K562 (cell line): ENCODE measurements at regions of chr7 and their contacts with region 1.

Region 1: GRCh38 chr7:149310113-149310836 is 48.3 kb downstream of the ZNF783 start:
- DNase-seq: peak; percentile 71 to 75 (median 73)
- ATAC-seq: peak; percentile 92
- H3K4me3 ChIP-seq: no peak overlapping the region
- H3K27ac ChIP-seq: no peak overlapping the region
- H3K4me1 ChIP-seq: peaks cover 0 to 3% of the 10 kb centered on the region in 2 experiments; a peak in 1 of 5 replicates
- H3K27me3 ChIP-seq: peaks cover 0 to 7% of the 10 kb centered on the region in 2 experiments; a peak in 1 of 5 replicates
- CTCF ChIP-seq: peak; percentile 84 to 94 (median 88); a peak in 5 of 6 replicates
- EP300 ChIP-seq: peak; percentile 12; the same call in 1 of the 2 replicates
- POLR2A ChIP-seq: no peak
- RAD21 ChIP-seq: peak; percentile 71 to 88

Region 2: GRCh38 chr7:149060156-149060555 is 250.1 kb before region 1 on chr7:
- CTCF ChIA-PET with region 1: no interaction called
- POLR2A ChIA-PET with region 1: no interaction called
- in situ Hi-C with region 1: no loop called
- intact Hi-C with region 1: no loop called
- DNase-seq: no peak
- ATAC-seq: no peak
- H3K4me3 ChIP-seq: no peak overlapping the region
- H3K27ac ChIP-seq: no peak overlapping the region
- H3K4me1 ChIP-seq: peaks cover 5 to 11% of the 10 kb centered on the region in 2 experiments; a peak in 2 of 5 replicates
- H3K27me3 ChIP-seq: no peaks in the 10 kb centered on the region
- CTCF ChIP-seq: no peak
- EP300 ChIP-seq: no peak
- POLR2A ChIP-seq: no peak
- RAD21 ChIP-seq: no peak

Region 3: DNA sequence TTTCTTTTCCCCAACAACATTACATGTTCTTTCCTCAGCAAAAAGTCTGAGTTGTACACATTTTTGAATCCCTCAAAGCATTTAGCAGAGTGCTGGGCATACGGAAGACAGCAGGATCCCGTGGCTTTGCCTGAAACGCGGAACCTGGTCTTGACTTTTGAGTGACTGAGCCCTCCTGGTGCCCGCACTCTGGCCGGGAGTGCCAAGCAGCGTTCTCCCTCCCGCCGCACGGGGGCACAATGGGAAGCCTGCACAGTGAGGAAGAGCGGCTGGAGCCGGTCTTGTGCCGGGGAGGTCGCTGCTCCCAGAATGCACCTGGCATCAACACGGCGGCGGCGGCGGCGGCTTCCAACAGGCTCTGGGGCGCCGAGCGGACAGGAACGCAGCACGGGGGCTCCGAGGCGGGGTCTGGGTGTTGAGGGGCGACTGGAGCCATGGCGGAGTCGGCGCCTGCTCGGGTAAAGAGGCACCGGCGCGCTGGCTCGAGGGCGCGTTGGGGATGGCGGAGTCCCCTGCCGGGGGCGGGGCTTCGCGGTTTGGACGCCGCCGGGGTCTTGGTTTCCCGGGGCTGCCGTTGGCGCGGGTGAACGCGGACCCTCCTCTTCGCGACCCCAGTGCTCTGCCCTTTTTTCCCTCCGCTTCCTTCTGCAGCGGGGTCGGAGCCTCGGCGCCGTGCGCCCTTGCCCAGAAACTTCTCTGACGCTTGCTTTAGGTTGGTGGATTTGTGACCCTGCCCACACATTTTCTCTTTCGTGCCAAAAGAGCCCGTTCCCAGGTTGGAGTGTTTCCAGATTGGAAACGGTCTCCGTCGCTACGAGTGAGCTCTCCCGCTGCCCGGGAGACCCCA is 70.7 kb before region 1 on chr7 and contains the start of gene ZNF212:
- CTCF ChIA-PET with region 1: no interaction called
- POLR2A ChIA-PET with region 1: no interaction called
- in situ Hi-C with region 1: no loop called
- intact Hi-C with region 1: no loop called
- DNase-seq: peak; percentile 97 to 99 (median 99)
- ATAC-seq: peak; percentile 100
- H3K4me3 ChIP-seq: peak within 1 kb of the TSS; percentile 74
- H3K27ac ChIP-seq: peak within 1 kb of the TSS; percentile 70
- H3K4me1 ChIP-seq: peaks cover 7 to 12% of the 10 kb centered on the region in 2 experiments
- H3K27me3 ChIP-seq: no peaks in the 10 kb centered on the region
- CTCF ChIP-seq: peak; percentile 95 to 97 (median 97)
- EP300 ChIP-seq: peak; percentile 36; the same call in 1 of the 2 replicates
- POLR2A ChIP-seq: peak; percentile 89
- RAD21 ChIP-seq: peak; percentile 45 to 50; a peak in 2 of 4 replicates
- polyA plus RNA-seq, gene ZNF212: 1.8 to 1.9 TPM

Region 4: GRCh38 chr7:149414745-149415390 is 104.6 kb after region 1 on chr7:
- CTCF ChIA-PET with region 1: no interaction called
- POLR2A ChIA-PET with region 1: no interaction called
- in situ Hi-C with region 1: loop called (anchors 5 kb)
- intact Hi-C with region 1: no loop called
- DNase-seq: no peak
- ATAC-seq: peak; percentile 21
- H3K4me3 ChIP-seq: no peak overlapping the region
- H3K27ac ChIP-seq: no peak overlapping the region
- H3K4me1 ChIP-seq: peaks cover 0 to 5% of the 10 kb centered on the region in 2 experiments; a peak in 1 of 5 replicates
- H3K27me3 ChIP-seq: peaks cover 7 to 19% of the 10 kb centered on the region in 2 experiments; a peak in 4 of 5 replicates
- CTCF ChIP-seq: no peak
- EP300 ChIP-seq: no peak
- POLR2A ChIP-seq: no peak
- RAD21 ChIP-seq: no peak